Posterior cingulate gyrus (tissue), 11 donors: ENCODE measurements at regions of chr4 and their contacts with region 1.

Region 1: GRCh38 chr4:29037501-29037900 is 1682.7 kb upstream of the PCDH7 start:
- DNase-seq: no peak

Region 2: DNA sequence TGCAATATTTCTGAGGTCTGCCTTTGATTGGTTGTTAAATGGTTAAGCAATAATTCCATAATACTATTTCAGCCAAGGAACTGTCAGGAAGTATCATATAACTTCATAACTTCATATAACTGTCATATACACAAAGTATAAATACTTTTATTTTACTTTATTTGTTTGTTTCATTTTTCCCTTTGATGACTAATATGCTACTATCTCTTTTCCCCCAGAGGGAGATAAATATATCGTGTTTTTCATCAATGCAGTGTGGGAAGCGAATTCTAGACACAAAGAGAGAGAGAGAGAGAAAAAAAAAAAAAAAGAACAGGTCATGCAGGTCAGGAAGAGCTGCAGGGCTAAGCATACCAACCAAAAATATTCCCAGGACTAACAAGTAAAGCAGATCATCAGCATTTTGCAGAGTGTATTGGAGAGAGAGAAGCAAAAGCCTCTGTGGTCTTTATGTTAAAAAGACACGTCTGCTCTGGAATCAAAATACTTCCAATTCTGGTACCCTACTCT is 327.6 kb before region 1 on chr4:
- intact Hi-C with region 1: no loop called
- DNase-seq: no peak

Region 3: GRCh38 chr4:29014555-29014954 is 22.9 kb before region 1 on chr4:
- intact Hi-C with region 1: loop called (anchors 1 kb)
- DNase-seq: no peak